ENCODE measurements at regions of chr17 and their contacts with region 1.

Region 1: GRCh38 chr17:5405400-5405799 is 14.1 kb downstream of the NUP88 start:
- DNase-seq: no peak
- ATAC-seq: no peak
- H3K4me3 ChIP-seq: no peak overlapping the region
- H3K27ac ChIP-seq: no peak overlapping the region
- H3K4me1 ChIP-seq: peaks cover 9% of the 10 kb centered on the region
- H3K27me3 ChIP-seq: no peaks in the 10 kb centered on the region
- CTCF ChIP-seq: no peak

Region 2: DNA sequence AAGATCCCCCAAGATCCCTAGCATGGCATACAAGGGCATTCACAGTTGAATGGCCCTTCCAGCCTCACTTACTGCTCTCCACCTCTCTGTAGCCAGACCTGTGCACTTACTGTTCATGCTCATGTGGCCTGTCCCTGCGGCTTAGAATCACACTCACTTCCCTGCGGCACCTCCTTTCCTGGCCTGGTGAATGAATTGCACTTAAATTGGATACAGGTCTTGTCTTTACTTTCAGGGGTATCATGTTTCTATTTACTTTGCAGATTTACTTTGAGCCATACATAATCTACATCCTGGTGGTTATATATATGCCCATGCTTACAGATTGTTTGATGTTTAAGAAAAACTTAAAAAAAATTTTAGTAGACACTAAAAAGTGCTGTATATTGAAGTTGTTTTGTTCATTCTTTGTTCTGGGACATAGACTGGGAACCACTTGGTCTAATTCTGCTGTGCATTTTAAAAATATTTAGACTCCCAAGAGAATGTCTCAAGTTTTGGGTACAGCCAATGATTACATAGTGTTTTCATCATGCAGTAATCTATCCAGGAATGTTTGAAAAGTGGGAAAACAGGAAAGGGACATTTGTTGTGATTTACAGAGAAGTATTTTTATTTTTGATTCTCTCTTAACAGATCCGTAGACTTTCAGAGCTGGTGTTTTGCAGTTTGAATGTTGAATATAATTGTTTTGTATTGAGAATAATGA is 49.8 kb before region 1 on chr17:
- intact Hi-C with region 1: loop called in 1 of 2 experiments (anchors 10 kb)
- DNase-seq: no peak
- ATAC-seq: peak in 2 of 4 donors; percentile 44 to 60
- H3K4me3 ChIP-seq: no peak overlapping the region
- H3K27ac ChIP-seq: peak overlapping the region; percentile 2
- H3K4me1 ChIP-seq: peaks cover 16% of the 10 kb centered on the region
- H3K27me3 ChIP-seq: no peaks in the 10 kb centered on the region
- CTCF ChIP-seq: no peak

Region 3: DNA sequence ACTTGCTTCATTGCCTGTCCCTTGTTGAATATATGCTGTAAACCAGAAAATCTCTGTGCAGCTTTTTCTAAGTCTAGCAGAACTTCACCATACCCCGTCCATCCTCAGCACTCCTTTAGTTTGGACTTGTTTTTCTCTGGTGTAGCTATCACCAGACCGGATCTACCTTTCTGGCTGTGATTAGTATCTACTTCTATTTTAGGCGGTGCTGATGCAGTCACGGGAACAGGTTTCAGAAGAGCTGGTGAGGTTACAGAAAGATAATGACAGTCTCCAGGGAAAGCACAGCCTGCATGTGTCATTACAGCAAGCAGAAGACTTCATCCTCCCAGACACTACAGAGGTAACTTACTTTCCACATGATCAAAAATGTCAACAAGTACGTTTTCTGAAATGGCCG is 32.3 kb before region 1 on chr17:
- intact Hi-C with region 1: loop called in 1 of 2 experiments (anchors 5 kb)
- DNase-seq: no peak
- ATAC-seq: peak; percentile 83 to 90 (median 90)
- H3K4me3 ChIP-seq: no peak overlapping the region
- H3K27ac ChIP-seq: peak overlapping the region; percentile 67
- H3K4me1 ChIP-seq: no peaks in the 10 kb centered on the region
- H3K27me3 ChIP-seq: no peaks in the 10 kb centered on the region
- CTCF ChIP-seq: no peak

Region 4: GRCh38 chr17:5381542-5381941 is 23.9 kb before region 1 on chr17:
- intact Hi-C with region 1: loop called in 1 of 2 experiments (anchors 1 kb)
- DNase-seq: no peak
- ATAC-seq: peak; percentile 10 to 27 (median 26)
- H3K4me3 ChIP-seq: no peak overlapping the region
- H3K27ac ChIP-seq: no peak overlapping the region
- H3K4me1 ChIP-seq: no peaks in the 10 kb centered on the region
- H3K27me3 ChIP-seq: no peaks in the 10 kb centered on the region
- CTCF ChIP-seq: no peak

Region 5: GRCh38 chr17:5464717-5465507 is 59.5 kb after region 1 on chr17:
- intact Hi-C with region 1: no loop called
- DNase-seq: no peak
- ATAC-seq: no peak
- H3K4me3 ChIP-seq: no peak overlapping the region
- H3K27ac ChIP-seq: no peak overlapping the region
- H3K4me1 ChIP-seq: peaks cover 7% of the 10 kb centered on the region
- H3K27me3 ChIP-seq: no peaks in the 10 kb centered on the region
- CTCF ChIP-seq: no peak

Measured in psoas muscle (tissue), 8 donors.